Colonic mucosa (tissue), 4 donors: ENCODE measurements at regions of chr19 and their contacts with region 1.

Region 1: GRCh38 chr19:56076498-56076897 is 44.6 kb downstream of the ZNF787 start:
- DNase-seq: peak; percentile 68
- H3K4me3 ChIP-seq: no peak overlapping the region
- H3K27ac ChIP-seq: no peak overlapping the region
- H3K4me1 ChIP-seq: peaks cover 7% of the 10 kb centered on the region
- H3K27me3 ChIP-seq: no peaks in the 10 kb centered on the region
- CTCF ChIP-seq: peak; percentile 79

Region 2: GRCh38 chr19:56155124-56155687 is 78.7 kb after region 1 on chr19:
- intact Hi-C with region 1: no loop called
- DNase-seq: no peak
- H3K4me3 ChIP-seq: no peak overlapping the region
- H3K27ac ChIP-seq: no peak overlapping the region
- H3K4me1 ChIP-seq: no peaks in the 10 kb centered on the region
- H3K27me3 ChIP-seq: no peaks in the 10 kb centered on the region
- CTCF ChIP-seq: no peak

Region 3: GRCh38 chr19:56252699-56253422 is 176.4 kb after region 1 on chr19:
- intact Hi-C with region 1: loop called (anchors 5 kb)
- DNase-seq: peak; percentile 82
- H3K4me3 ChIP-seq: no peak overlapping the region
- H3K27ac ChIP-seq: no peak overlapping the region
- H3K4me1 ChIP-seq: no peaks in the 10 kb centered on the region
- H3K27me3 ChIP-seq: no peaks in the 10 kb centered on the region
- CTCF ChIP-seq: peak; percentile 75